ENCODE measurements at regions of chr2 and their contacts with region 1.

Region 1: GRCh38 chr2:46062637-46063412 is 234.4 kb upstream of the EPAS1 start:
- DNase-seq: peak in 4 of 5 donors; percentile 84 to 91 (median 88)
- ATAC-seq: peak; percentile 63 to 84 (median 80)
- H3K4me3 ChIP-seq: peak overlapping the region in 2 of 12 donors; percentile 6 to 19
- H3K27ac ChIP-seq: peak overlapping the region in 11 of 12 donors; percentile 33 to 82 (median 69)
- H3K4me1 ChIP-seq: peaks cover 0 to 55% (median 23%) of the 10 kb centered on the region in 12 donors
- H3K27me3 ChIP-seq: no peaks in the 10 kb centered on the region
- CTCF ChIP-seq: peak; percentile 82 to 96 (median 88)
- POLR2A ChIP-seq: no peak

Region 2: GRCh38 chr2:45706033-45706432 is 356.8 kb before region 1 on chr2:
- intact Hi-C with region 1: no loop called
- DNase-seq: no peak
- ATAC-seq: peak in 1 of 4 donors; percentile 37
- H3K4me3 ChIP-seq: no peak overlapping the region
- H3K27ac ChIP-seq: peak overlapping the region in 2 of 12 donors; percentile 13 to 19
- H3K4me1 ChIP-seq: peaks cover 0 to 47% (median 20%) of the 10 kb centered on the region in 12 donors
- H3K27me3 ChIP-seq: no peaks in the 10 kb centered on the region
- CTCF ChIP-seq: no peak
- POLR2A ChIP-seq: no peak

Region 3: DNA sequence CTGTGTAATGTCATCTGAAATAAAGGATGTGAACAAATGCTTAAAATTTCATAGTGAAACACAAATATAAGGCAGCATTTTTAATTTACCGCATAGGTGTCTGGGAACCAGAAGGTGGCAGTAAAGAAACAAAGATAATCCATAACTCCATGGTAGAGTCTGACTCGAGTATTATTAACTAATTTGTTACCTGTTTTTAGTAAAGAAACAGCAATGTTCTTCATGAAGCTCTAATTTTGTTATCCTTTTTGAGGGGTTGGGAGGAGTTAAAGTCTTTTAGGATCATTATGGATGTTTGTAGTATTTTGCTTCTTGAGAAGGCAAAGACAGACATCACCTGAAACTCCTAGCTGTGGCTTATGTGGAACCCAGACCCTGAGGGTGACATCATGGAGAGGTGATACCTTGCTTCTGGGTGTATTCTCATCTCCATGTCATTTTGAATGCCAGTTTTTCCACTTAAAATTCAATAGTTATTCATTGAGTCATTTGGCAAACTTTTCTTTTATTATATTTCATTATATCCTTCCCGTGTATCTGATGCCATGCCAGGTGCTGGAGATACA is 51.8 kb before region 1 on chr2:
- intact Hi-C with region 1: loop called in 2 of 10 experiments (anchors 2 to 5 kb)
- DNase-seq: no peak
- ATAC-seq: peak in 3 of 4 donors; percentile 50 to 68 (median 54)
- H3K4me3 ChIP-seq: no peak overlapping the region
- H3K27ac ChIP-seq: no peak overlapping the region
- H3K4me1 ChIP-seq: peaks cover 0 to 27% (median 12%) of the 10 kb centered on the region in 12 donors
- H3K27me3 ChIP-seq: no peaks in the 10 kb centered on the region
- CTCF ChIP-seq: peak; percentile 44 to 81 (median 72)
- POLR2A ChIP-seq: no peak

Region 4: DNA sequence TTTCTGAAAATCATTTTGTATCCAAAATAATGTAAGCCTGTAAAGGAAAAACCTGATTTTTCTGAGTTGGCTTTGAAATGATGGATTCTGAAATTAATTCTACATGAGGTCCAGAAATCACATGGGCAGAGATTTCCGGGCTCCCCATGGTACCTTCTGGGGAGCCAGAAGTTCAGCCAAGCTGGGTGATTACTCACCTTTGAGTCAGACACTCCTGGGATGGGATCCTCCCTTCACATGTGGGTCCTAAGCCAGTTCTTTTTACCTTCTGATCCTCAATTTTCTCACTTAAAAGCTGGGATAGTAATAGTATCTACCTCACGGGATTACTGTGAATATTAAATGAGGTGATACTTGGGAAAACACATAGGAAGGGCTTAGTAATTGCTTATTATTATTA is 54.6 kb after region 1 on chr2:
- intact Hi-C with region 1: loop called in 3 of 10 experiments (anchors 2 to 10 kb)
- DNase-seq: no peak
- ATAC-seq: peak in 1 of 4 donors; percentile 22
- H3K4me3 ChIP-seq: no peak overlapping the region
- H3K27ac ChIP-seq: peak overlapping the region in 11 of 12 donors; percentile 71 to 90 (median 79)
- H3K4me1 ChIP-seq: peaks cover 4 to 66% (median 54%) of the 10 kb centered on the region in 12 donors
- H3K27me3 ChIP-seq: no peaks in the 10 kb centered on the region
- CTCF ChIP-seq: no peak
- POLR2A ChIP-seq: no peak

Region 5: DNA sequence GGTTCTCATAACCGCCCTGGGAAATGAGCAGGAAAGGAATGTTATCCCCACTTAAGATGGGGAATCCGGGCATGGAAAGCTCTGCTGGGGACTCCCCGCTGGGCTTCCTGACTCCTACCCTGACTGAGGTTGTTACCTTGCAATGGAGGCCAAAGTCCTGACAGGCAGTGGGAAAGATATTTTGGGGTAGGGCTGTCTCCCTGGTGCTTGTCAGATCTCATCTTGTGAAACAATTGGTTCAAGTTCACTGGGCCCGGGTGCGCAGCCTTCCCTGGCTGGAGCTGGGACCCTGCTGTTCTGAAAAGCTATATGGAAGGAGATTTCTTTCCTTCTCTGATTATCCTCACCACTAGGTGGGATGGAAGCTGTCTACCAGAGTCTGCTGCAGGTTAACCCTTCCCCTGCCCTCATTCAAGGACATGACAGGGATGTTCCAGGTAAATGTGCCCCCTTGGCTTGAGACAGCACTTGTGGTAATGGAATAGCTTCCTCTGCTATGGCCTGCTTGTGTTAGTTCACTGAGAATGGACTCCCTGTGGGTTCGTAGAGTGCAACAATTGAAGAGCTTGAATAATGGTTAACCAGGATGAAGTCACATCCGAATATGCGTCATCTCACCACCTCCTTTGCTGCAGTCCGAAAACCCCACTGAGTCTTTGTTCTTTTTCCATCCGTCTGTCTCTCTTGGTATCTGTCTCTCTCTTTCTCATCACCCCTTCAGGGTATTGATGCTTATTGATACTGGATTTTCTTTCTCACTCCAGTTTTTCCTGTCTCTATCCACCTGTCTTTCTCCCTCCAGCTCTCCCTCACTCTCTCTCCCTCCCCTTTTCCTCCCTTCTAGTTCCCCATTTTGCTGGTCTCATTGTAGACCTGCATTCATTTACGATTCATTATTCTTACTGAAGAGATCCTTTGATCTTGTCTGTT is 166.6 kb after region 1 on chr2:
- intact Hi-C with region 1: no loop called
- DNase-seq: no peak
- ATAC-seq: peak in 1 of 4 donors; percentile 11
- H3K4me3 ChIP-seq: no peak overlapping the region
- H3K27ac ChIP-seq: peak overlapping the region in 4 of 12 donors; percentile 32 to 49 (median 42)
- H3K4me1 ChIP-seq: peaks cover 0 to 35% (median 14%) of the 10 kb centered on the region in 12 donors
- H3K27me3 ChIP-seq: no peaks in the 10 kb centered on the region
- CTCF ChIP-seq: no peak
- POLR2A ChIP-seq: no peak

Region 6: GRCh38 chr2:46351750-46352138 is 288.9 kb after region 1 on chr2:
- intact Hi-C with region 1: loop called in 1 of 10 experiments (anchors 5 kb)
- DNase-seq: peak; percentile 66 to 81 (median 76)
- ATAC-seq: peak; percentile 36 to 77 (median 57)
- H3K4me3 ChIP-seq: peak overlapping the region in 8 of 12 donors; percentile 2 to 30 (median 22)
- H3K27ac ChIP-seq: peak overlapping the region; percentile 63 to 84 (median 76)
- H3K4me1 ChIP-seq: peaks cover 18 to 96% (median 78%) of the 10 kb centered on the region in 12 donors
- H3K27me3 ChIP-seq: no peaks in the 10 kb centered on the region
- CTCF ChIP-seq: no peak
- POLR2A ChIP-seq: peak in 1 of 2 donors; percentile 38

Measured in heart left ventricle (tissue), 16 donors.